ENCODE measurements at regions of chr11 and their contacts with region 1.

Region 1: GRCh38 chr11:126355324-126355925 is at the start of gene ST3GAL4:
- DNase-seq: peak; percentile 87 to 91
- ATAC-seq: peak; percentile 76 to 88 (median 84)
- H3K4me3 ChIP-seq: peak within 1 kb of the TSS; percentile 36 to 97 (median 74)
- H3K27ac ChIP-seq: peak within 1 kb of the TSS; percentile 68 to 96 (median 88)
- H3K4me1 ChIP-seq: peaks cover 28 to 93% (median 89%) of the 10 kb centered on the region in 9 donors
- H3K27me3 ChIP-seq: no peaks in the 10 kb centered on the region
- CTCF ChIP-seq: no peak
- total RNA-seq, gene ST3GAL4: 24.8 to 51.0 (median 43.4) TPM

Region 2: DNA sequence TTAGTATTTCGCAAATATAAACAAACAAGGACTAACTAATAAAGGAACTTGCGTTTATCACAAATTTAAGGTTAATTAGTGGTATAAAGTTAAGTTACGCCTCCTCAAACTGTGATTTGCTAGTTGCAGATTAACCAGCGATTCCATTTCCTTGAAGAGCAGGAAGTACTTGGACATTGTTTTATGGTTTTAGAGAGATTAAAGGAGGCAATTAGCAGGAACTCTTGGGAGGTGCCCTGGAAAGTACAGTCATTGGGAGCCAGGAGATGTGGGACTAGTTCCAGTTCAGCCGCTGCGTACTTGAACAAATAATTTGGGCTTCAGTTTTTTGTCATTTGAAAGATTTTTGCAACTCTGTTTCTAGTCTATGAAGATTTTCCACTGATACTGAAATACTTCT is 140.6 kb before region 1 on chr11:
- intact Hi-C with region 1: no loop called
- DNase-seq: no peak
- ATAC-seq: no peak
- H3K4me3 ChIP-seq: peak overlapping the region in 4 of 10 donors; percentile 5 to 30 (median 18)
- H3K27ac ChIP-seq: peak overlapping the region in 2 of 10 donors; percentile 6 to 51
- H3K4me1 ChIP-seq: peaks cover 4 to 54% (median 34%) of the 10 kb centered on the region in 9 donors
- H3K27me3 ChIP-seq: no peaks in the 10 kb centered on the region
- CTCF ChIP-seq: no peak

Region 3: DNA sequence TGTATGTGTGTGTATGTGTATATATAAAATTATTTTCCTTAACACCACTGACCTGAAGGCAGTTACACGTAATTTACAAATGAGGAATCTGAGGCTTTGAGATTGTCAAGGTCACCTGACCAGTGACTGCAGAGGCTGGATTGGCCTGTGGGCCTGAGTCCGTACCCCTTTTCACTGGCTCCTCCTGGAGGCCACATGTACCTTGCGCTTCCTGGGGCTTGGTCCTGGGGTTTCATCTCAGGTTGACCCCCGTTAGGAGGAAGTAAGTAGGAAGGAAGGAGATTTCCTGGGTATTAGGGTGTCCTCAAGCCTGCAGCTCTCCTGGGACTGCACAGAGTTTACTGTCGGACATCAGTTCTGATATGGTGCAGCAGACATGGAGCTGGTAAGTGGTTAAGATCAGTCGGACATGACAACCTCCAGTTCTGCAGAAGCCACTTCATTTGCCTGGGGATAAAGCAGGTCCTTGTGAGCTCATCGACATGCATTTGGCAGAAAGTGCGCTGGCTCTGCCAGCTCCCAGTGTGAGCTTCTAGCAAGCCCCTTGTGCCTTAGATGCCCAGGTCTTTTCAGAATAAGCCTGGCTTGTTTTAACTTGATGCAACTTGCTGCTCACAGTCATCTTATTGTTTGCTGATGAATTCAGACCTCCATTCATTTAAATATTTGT is 36.7 kb after region 1 on chr11:
- intact Hi-C with region 1: loop called in 2 of 10 experiments (anchors 5 kb)
- DNase-seq: peak in 1 of 2 donors; percentile 56
- ATAC-seq: peak; percentile 41 to 67 (median 54)
- H3K4me3 ChIP-seq: peak overlapping the region in 2 of 10 donors; percentile 3 to 17
- H3K27ac ChIP-seq: peak overlapping the region; percentile 40 to 87 (median 80)
- H3K4me1 ChIP-seq: peaks cover 16 to 83% (median 58%) of the 10 kb centered on the region in 9 donors
- H3K27me3 ChIP-seq: no peaks in the 10 kb centered on the region
- CTCF ChIP-seq: peak in 6 of 9 donors; percentile 29 to 58 (median 39)

Region 4: GRCh38 chr11:126416542-126417090 is 61.2 kb after region 1 on chr11:
- intact Hi-C with region 1: loop called in 6 of 10 experiments (anchors 5 to 10 kb)
- DNase-seq: peak; percentile 92 to 95
- ATAC-seq: peak; percentile 85 to 91 (median 88)
- H3K4me3 ChIP-seq: peak overlapping the region in 9 of 10 donors; percentile 27 to 55 (median 52)
- H3K27ac ChIP-seq: peak overlapping the region; percentile 70 to 93 (median 85)
- H3K4me1 ChIP-seq: peaks cover 26 to 90% (median 64%) of the 10 kb centered on the region in 9 donors
- H3K27me3 ChIP-seq: no peaks in the 10 kb centered on the region
- CTCF ChIP-seq: peak in 1 of 9 donors; percentile 8